Activated CD8-positive, alpha-beta T cell treated with anti-CD3 and anti-CD28 coated beads for 36 hours (primary cell): ENCODE measurements at regions of chr5 and their contacts with region 1.

Region 1: GRCh38 chr5:170267431-170268152 is 30.0 kb downstream of the LCP2 start:
- DNase-seq: peak; percentile 84
- ATAC-seq: peak; percentile 26
- H3K4me3 Mint-ChIP-seq: peak overlapping the region; percentile 56
- H3K27ac Mint-ChIP-seq: peak overlapping the region; percentile 93
- H3K4me1 Mint-ChIP-seq: peaks cover 95% of the 10 kb centered on the region
- H3K27me3 Mint-ChIP-seq: no peaks in the 10 kb centered on the region
- CTCF ChIP-seq: peak; percentile 91

Region 2: GRCh38 chr5:170247363-170247762 is 20.2 kb before region 1 on chr5:
- CTCF ChIA-PET with region 1: interaction called, 10 read pairs
- POLR2A ChIA-PET with region 1: interaction called, 4 read pairs
- intact Hi-C with region 1: no loop called
- DNase-seq: no peak
- ATAC-seq: no peak
- H3K4me3 Mint-ChIP-seq: no peak overlapping the region
- H3K27ac Mint-ChIP-seq: no peak overlapping the region
- H3K4me1 Mint-ChIP-seq: peaks cover 35% of the 10 kb centered on the region
- H3K27me3 Mint-ChIP-seq: no peaks in the 10 kb centered on the region
- CTCF ChIP-seq: no peak

Region 3: GRCh38 chr5:170278611-170279452 is 11.2 kb after region 1 on chr5:
- CTCF ChIA-PET with region 1: interaction called, 63 read pairs
- POLR2A ChIA-PET with region 1: interaction called, 64 read pairs
- intact Hi-C with region 1: no loop called
- DNase-seq: peak; percentile 97
- ATAC-seq: peak; percentile 76
- H3K4me3 Mint-ChIP-seq: peak overlapping the region; percentile 43
- H3K27ac Mint-ChIP-seq: peak overlapping the region; percentile 96
- H3K4me1 Mint-ChIP-seq: peaks cover 93% of the 10 kb centered on the region
- H3K27me3 Mint-ChIP-seq: no peaks in the 10 kb centered on the region
- CTCF ChIP-seq: no peak

Region 4: GRCh38 chr5:170293273-170293672 is 25.7 kb after region 1 on chr5:
- CTCF ChIA-PET with region 1: interaction called, 180 read pairs
- POLR2A ChIA-PET with region 1: interaction called, 470 read pairs
- intact Hi-C with region 1: loop called (anchors 5 kb)
- DNase-seq: peak; percentile 89
- ATAC-seq: peak; percentile 43
- H3K4me3 Mint-ChIP-seq: peak overlapping the region; percentile 97
- H3K27ac Mint-ChIP-seq: peak overlapping the region; percentile 96
- H3K4me1 Mint-ChIP-seq: peaks cover 61% of the 10 kb centered on the region
- H3K27me3 Mint-ChIP-seq: no peaks in the 10 kb centered on the region
- CTCF ChIP-seq: no peak

Region 5: GRCh38 chr5:170312666-170313065 is 45.1 kb after region 1 on chr5:
- CTCF ChIA-PET with region 1: interaction called, 11 read pairs
- POLR2A ChIA-PET with region 1: interaction called, 470 read pairs
- intact Hi-C with region 1: no loop called
- DNase-seq: peak; percentile 82
- ATAC-seq: peak; percentile 91
- H3K4me3 Mint-ChIP-seq: peak overlapping the region; percentile 75
- H3K27ac Mint-ChIP-seq: peak overlapping the region; percentile 87
- H3K4me1 Mint-ChIP-seq: peaks cover 66% of the 10 kb centered on the region
- H3K27me3 Mint-ChIP-seq: no peaks in the 10 kb centered on the region
- CTCF ChIP-seq: no peak

Region 6: DNA sequence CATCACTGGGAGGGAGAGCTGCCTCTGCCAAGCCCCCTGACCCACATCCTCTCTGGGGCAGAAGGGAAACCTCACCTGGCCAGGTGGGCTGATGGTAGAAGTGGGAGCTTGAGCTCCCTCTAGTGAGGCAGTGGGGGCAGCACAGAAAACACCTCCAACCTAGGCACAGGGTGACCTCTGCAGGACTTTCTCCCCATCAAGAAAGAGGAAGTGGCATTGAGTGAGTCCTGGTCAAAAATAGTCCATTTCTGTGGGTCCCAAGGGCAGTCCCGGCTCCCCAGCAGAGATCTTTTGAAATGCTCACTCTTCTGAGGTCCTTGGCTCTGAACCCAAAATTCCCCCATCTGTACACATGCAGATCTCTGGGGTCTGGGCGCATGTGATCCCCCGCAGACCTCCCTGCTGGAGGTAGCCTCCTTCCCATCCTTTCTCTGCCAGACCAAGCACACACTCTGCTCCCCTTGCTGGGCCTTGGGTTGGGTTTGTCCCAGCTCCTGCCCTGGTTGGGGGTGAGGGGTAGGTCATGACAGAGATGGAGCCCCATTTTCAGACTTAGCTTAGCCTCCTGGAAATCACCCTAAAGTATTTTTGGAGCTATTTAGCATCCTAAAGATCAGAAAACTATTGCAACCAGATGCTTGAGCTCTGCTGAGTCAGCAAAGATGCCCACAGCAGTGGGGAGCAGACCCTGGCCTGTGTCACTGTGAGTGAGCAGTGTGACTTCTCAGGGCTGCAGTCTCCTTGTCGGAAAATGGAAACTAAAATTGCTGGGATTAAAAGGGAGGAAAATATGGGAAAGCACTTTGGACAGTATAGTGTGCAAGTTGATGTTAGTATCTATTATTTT is 71.6 kb after region 1 on chr5:
- CTCF ChIA-PET with region 1: interaction called, 132 read pairs
- POLR2A ChIA-PET with region 1: interaction called, 82 read pairs
- intact Hi-C with region 1: loop called (anchors 2 kb)
- DNase-seq: peak; percentile 79
- ATAC-seq: peak; percentile 70
- H3K4me3 Mint-ChIP-seq: no peak overlapping the region
- H3K27ac Mint-ChIP-seq: peak overlapping the region; percentile 75
- H3K4me1 Mint-ChIP-seq: peaks cover 39% of the 10 kb centered on the region
- H3K27me3 Mint-ChIP-seq: no peaks in the 10 kb centered on the region
- CTCF ChIP-seq: peak; percentile 95